BJ (cell line): ENCODE measurements at regions of chr3 and their contacts with region 1.

Region 1: GRCh38 chr3:124552239-124552638 is 178.0 kb upstream of the UMPS start:
- DNase-seq: no peak
- H3K4me3 ChIP-seq: no peak overlapping the region
- H3K27me3 ChIP-seq: no peaks in the 10 kb centered on the region
- CTCF ChIP-seq: no peak

Region 2: DNA sequence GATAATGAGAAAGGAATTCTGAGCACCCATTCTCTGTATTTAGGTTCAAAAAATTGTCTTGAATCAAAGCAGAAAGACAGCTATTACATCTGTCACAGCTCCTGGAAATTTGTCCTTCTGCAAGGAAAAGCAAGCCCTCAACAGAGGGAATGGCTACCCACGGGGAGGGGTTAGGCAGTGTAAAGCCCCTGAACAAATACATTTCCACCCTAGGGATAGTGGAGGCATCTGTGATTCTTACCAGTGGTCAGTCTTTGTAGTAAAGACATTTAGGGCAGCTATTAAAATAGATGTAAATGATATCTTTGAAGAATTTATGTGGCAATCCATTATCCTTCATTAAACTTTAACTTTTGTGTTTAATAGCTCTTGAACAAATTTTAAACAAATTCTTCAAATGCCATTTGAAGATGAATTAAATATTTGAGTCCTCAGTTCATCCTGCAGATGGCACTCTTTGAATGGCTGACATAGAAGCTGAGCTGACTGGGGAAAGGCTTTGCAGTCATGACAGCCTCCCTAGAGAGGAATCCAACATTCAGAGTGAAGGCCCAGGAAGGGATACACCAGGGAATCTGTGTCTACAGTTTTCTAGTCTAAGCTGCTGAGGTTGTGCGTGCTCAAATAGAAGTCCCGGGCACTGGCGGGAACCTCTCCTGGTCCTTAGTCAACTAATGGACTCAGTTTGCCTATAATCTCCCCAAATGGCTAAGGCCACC is 200.7 kb before region 1 on chr3:
- CTCF ChIA-PET with region 1: interaction called, 10 read pairs
- POLR2A ChIA-PET with region 1: no interaction called
- DNase-seq: peak; percentile 62
- H3K4me3 ChIP-seq: no peak overlapping the region
- H3K27me3 ChIP-seq: no peaks in the 10 kb centered on the region; the same call in 1 of the 2 replicates
- CTCF ChIP-seq: peak; percentile 57

Region 3: DNA sequence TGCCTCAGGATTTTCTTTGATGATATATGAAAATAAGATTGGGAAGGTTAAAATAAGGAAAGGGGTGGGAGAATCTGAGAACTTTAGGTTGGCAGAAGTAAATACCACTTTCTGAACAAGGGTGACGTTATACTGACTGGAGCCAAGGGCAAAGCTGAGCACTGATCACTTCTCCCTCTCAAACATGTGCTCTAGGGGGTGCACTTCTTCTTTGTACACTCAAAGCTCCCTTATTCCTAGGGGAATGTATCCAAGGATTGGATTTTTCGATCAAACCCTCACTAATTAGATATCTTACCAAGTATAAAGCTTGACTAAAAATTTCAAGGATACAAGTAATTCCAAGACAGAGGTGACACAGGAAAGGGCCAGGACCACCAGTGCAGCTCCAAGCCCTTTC is 65.9 kb before region 1 on chr3:
- CTCF ChIA-PET with region 1: interaction called, 19 read pairs
- POLR2A ChIA-PET with region 1: no interaction called
- DNase-seq: no peak
- H3K4me3 ChIP-seq: no peak overlapping the region
- H3K27me3 ChIP-seq: peaks cover 2% of the 10 kb centered on the region; the same call in 1 of the 2 replicates
- CTCF ChIP-seq: no peak

Region 4: GRCh38 chr3:124540550-124541211 is 11.6 kb before region 1 on chr3:
- CTCF ChIA-PET with region 1: interaction called, 21 read pairs
- POLR2A ChIA-PET with region 1: no interaction called
- DNase-seq: no peak
- H3K4me3 ChIP-seq: no peak overlapping the region
- H3K27me3 ChIP-seq: no peaks in the 10 kb centered on the region
- CTCF ChIP-seq: no peak

Region 5: DNA sequence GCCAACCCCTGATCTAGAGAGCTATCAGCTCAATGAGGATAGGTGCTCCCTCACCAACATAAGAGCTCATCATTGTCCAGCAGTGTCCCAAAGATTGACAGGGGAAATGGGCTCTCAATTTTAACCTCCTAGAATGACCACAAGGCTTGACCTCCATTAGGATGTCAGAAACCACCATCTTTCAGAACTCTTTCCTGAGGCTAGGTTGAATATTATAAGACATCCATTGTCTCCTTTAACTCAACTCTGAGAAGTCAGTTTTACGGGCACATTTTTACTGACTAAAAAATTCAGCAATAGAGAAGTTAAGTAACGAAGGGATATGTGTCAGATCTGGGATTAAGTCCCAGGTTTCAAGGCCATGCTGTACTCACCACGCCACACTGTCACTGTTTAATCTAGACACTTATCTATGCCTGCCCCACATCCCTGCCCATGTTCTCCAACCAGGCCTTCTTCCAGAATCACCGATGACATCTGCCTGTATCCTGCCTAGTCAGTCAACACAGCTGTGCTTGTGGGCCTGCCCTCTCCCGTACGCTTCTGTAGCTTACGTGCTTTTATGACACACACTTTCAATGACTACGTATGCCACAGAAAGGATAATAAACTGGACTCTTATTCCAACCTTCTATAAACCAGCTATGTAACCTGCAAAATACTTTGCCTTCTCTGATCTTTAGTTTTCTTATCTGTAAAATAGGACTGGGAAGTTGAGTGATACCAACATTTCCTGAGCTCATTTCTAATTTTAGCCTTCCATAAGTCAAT is 399.5 kb after region 1 on chr3:
- CTCF ChIA-PET with region 1: no interaction called
- POLR2A ChIA-PET with region 1: interaction called, 11 read pairs
- DNase-seq: peak; percentile 11
- H3K4me3 ChIP-seq: no peak overlapping the region
- H3K27me3 ChIP-seq: no peaks in the 10 kb centered on the region
- CTCF ChIP-seq: no peak